ENCODE measurements at regions of chr14 and their contacts with region 1.

Region 1: DNA sequence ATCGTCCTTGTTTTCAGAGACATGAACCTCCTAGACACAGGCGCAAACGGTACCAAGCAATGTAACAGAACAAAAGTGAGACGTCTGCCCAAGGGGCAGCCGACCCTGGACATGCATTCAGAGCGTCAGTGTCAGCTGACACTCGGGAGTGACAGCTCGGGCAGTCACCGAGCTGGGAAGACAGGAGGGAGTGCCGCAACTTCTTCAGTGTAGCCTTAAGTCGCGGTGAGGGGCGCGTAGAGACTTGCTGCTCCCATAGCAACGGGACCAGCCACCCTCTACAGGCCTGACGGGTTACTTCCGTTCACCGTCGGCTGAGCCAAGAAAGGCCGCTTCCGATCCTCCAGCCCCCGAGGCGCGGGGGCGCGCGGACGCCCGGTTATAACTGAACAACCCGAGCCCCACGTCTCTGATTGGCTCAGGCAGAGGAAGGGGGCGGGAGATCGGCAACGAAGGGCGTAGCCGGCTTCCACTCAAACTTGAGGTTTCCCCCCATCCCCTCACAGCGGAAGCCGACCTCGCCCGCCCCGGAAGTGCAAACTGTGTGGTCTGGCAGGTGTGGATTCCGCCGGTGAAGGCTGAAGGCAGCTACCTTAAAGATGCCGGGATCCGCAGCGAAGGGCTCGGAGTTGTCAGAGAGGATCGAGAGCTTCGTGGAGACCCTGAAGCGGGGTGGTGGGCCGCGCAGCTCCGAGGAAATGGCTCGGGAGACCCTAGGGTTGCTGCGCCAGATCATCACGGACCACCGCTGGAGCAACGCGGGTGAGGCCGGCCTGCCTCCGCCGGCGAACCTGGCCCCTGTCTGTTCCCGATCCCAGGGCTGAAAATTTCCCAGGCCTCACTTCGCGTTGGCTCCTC is at the start of gene EIF2B2:
- DNase-seq: peak; percentile 99
- H3K4me3 Mint-ChIP-seq: peak within 1 kb of the TSS; percentile 94
- H3K27ac Mint-ChIP-seq: peak within 1 kb of the TSS; percentile 88
- H3K4me1 Mint-ChIP-seq: peaks cover 27% of the 10 kb centered on the region
- H3K27me3 Mint-ChIP-seq: peaks cover 2% of the 10 kb centered on the region
- total RNA-seq, gene EIF2B2: 46.4 and 50.4 TPM in 2 replicates

Region 2: GRCh38 chr14:74945823-74946682 is 56.6 kb before region 1 on chr14:
- intact Hi-C with region 1: loop called (anchors 5 kb)
- DNase-seq: peak; percentile 63
- H3K4me3 Mint-ChIP-seq: no peak overlapping the region
- H3K27ac Mint-ChIP-seq: no peak overlapping the region
- H3K4me1 Mint-ChIP-seq: peaks cover 23% of the 10 kb centered on the region
- H3K27me3 Mint-ChIP-seq: no peaks in the 10 kb centered on the region

Region 3: DNA sequence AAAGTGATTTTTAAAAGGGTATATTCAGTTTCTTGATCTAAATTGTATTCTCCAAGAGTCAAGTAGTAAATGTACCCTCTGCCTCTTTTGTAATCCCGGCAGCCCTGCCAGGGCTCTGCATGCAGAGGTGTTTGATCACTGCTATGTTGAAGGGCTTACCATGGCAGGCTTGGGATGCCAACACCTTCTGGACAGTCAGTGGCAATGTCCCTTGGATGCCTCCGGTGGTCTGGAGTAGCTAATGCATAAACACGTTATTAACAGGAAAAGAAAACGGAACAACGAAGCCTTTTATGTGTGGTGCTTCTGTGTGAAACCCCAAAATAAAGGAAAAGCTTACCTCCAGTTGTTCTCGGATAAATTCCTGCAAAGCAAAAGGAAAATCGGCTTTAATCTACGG is 20.0 kb after region 1 on chr14:
- intact Hi-C with region 1: no loop called
- DNase-seq: no peak
- H3K4me3 Mint-ChIP-seq: no peak overlapping the region
- H3K27ac Mint-ChIP-seq: no peak overlapping the region
- H3K4me1 Mint-ChIP-seq: no peaks in the 10 kb centered on the region
- H3K27me3 Mint-ChIP-seq: no peaks in the 10 kb centered on the region

Region 4: GRCh38 chr14:75063407-75064213 is 61.0 kb after region 1 on chr14 and contains the start of gene ACYP1:
- intact Hi-C with region 1: loop called (anchors 5 kb)
- DNase-seq: peak; percentile 89
- H3K4me3 Mint-ChIP-seq: peak within 1 kb of the TSS; percentile 99
- H3K27ac Mint-ChIP-seq: peak within 1 kb of the TSS; percentile 94
- H3K4me1 Mint-ChIP-seq: peaks cover 27% of the 10 kb centered on the region
- H3K27me3 Mint-ChIP-seq: no peaks in the 10 kb centered on the region
- total RNA-seq, gene ACYP1: 42.8 and 43.5 TPM in 2 replicates

Measured in activated T-helper 2 cell treated with anti-CD3 and anti-CD28 coated beads, Interferon-gamma antibody, Interleukin-2, Interleukin-4, amounts not matched to agents 10 μg/mL and 5 μg/mL and 100 μg/mL, durations not matched to agents 14 hours and 24 hours and 36 hours (primary cell).